Endothelial cell of umbilical vein (primary cell): ENCODE measurements at regions of chr9 and their contacts with region 1.

Region 1: DNA sequence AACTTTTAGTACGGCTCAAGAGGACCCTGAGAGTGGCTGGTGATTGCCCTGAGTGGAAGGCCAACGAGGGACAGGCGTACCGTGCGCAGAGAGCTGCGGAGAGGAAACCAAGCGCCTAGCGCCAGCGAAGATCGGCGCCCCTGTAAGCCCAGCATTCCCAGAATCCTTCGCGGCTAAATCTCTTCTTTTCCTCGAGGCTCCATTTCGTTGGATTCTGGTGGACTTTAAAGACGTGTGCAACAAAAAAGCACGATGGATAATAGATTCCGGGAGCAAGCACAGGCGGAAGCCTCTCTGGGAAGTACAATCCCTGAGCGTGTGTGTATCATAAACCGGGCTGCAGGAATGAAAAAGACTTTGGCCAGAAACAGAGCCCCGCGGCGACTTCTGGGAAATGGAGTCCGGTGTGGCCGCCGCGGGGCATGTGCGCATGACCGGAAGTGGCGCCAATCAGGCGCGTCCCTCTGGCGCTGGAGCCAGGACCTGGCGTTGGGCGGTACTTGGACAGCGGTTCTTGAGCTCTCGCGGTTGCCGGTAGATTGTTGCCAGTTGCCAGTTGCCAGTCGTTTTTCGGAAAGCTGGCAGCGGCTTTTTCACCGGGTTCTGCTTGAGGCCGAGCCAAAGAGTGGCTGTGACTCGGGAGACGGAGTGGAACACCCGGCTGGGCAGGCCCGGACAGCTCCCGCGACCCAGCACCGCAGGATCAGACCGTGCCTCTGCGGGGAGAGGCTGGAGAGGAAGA is at the start of gene ZNF79:
- DNase-seq: peak; percentile 97
- H3K4me3 ChIP-seq: peak within 1 kb of the TSS; percentile 54 to 90 (median 62)
- H3K27ac ChIP-seq: peak within 1 kb of the TSS; percentile 79
- H3K4me1 ChIP-seq: peaks cover 25% of the 10 kb centered on the region
- H3K27me3 ChIP-seq: no peaks in the 10 kb centered on the region
- CTCF ChIP-seq: no peak
- POLR2A ChIP-seq: peak; percentile 86
- total RNA-seq, gene ZNF79: 8.9 and 10.6 TPM in 2 replicates

Region 2: DNA sequence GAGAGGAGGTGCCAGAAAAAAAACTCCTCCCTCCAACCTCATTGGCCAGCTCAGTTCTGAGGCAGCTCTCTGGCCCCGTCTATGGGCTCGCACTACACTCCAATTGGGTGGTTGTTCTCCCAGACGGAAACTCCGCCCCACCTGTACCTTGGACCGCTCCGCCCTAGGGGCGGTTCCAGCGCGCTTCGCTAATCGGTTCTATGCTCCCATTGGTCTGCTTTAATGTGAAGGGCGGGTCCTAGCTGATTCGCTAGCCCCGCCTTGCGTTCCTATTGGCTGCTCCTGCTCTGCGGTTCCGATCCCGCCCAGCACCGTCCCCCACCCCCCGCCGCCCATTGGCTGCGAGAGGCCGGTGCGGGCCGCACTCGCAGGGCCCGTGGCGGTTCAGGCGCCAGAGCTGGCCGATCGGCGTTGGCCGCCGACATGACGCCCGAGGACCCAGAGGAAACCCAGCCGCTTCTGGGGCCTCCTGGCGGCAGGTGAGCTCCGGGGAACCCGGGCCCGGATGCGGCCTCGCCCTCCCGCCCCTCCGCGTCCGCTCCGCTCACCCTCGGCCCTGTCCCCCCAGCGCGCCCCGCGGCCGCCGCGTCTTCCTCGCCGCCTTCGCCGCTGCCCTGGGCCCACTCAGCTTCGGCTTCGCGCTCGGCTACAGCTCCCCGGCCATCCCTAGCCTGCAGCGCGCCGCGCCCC is 27.2 kb before region 1 on chr9 and contains the start of gene SLC2A8:
- CTCF ChIA-PET with region 1: interaction called, 7 read pairs
- POLR2A ChIA-PET with region 1: interaction called, 4 read pairs
- dilution Hi-C with region 1: no loop called
- intact Hi-C with region 1: loop called (anchors 1 kb)
- DNase-seq: peak; percentile 100
- H3K4me3 ChIP-seq: peak within 1 kb of the TSS; percentile 42 to 85 (median 60)
- H3K27ac ChIP-seq: peak within 1 kb of the TSS; percentile 5
- H3K4me1 ChIP-seq: peaks cover 9% of the 10 kb centered on the region
- H3K27me3 ChIP-seq: peaks cover 2 to 4% of the 10 kb centered on the region in 2 experiments
- CTCF ChIP-seq: no peak
- POLR2A ChIP-seq: peak; percentile 62
- total RNA-seq, gene SLC2A8: 17.0 and 19.3 TPM in 2 replicates

Region 3: GRCh38 chr9:127450830-127451724 is 27.0 kb after region 1 on chr9 and contains the starts of genes LRSAM1 and RPL12:
- CTCF ChIA-PET with region 1: interaction called, 5 read pairs
- POLR2A ChIA-PET with region 1: interaction called, 10 read pairs
- dilution Hi-C with region 1: no loop called
- intact Hi-C with region 1: loop called (anchors 1 kb)
- DNase-seq: peak; percentile 93
- H3K4me3 ChIP-seq: peak within 1 kb of the TSS; percentile 54 to 85 (median 60)
- H3K27ac ChIP-seq: peak within 1 kb of the TSS; percentile 65
- H3K4me1 ChIP-seq: peaks cover 19% of the 10 kb centered on the region
- H3K27me3 ChIP-seq: no peaks in the 10 kb centered on the region
- CTCF ChIP-seq: no peak
- POLR2A ChIP-seq: peak; percentile 99
- total RNA-seq, gene LRSAM1: 18.5 and 18.9 TPM in 2 replicates
- total RNA-seq, gene RPL12: 1,231 and 1,361 TPM in 2 replicates